ENCODE measurements at regions of chr7 and their contacts with region 1.

Region 1: DNA sequence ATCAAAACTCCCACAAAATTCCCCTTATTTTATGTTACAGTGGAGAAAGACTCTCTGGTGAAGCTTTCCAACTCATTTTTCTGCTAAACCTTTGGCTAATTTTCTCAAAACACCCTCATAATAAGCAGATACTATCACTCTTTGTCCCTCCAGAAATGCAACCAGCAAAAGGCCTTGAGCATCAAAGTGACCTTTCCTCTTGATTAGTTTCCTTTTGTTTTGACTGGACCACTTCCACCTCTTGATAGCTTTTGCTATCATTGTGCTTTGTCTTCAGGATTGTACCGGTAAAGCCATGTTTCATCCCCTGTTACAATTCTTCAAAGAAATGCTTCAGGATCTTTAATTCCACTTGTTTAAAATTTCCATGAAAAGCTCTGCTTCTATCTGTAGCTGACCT is 115.1 kb upstream of the SLC13A1 start:
- DNase-seq: no peak
- ATAC-seq: no peak
- H3K4me3 ChIP-seq: no peak overlapping the region
- H3K27ac ChIP-seq: no peak overlapping the region
- H3K4me1 ChIP-seq: no peaks in the 10 kb centered on the region
- H3K27me3 ChIP-seq: no peaks in the 10 kb centered on the region
- CTCF ChIP-seq: no peak

Region 2: GRCh38 chr7:122364761-122365280 is 950.1 kb before region 1 on chr7:
- intact Hi-C with region 1: loop called in 1 of 10 experiments (anchors 5 kb)
- DNase-seq: no peak
- ATAC-seq: no peak
- H3K4me3 ChIP-seq: no peak overlapping the region
- H3K27ac ChIP-seq: no peak overlapping the region
- H3K4me1 ChIP-seq: no peaks in the 10 kb centered on the region
- H3K27me3 ChIP-seq: no peaks in the 10 kb centered on the region
- CTCF ChIP-seq: no peak

Region 3: GRCh38 chr7:123242467-123243092 is 72.3 kb before region 1 on chr7:
- intact Hi-C with region 1: no loop called
- DNase-seq: no peak
- ATAC-seq: no peak
- H3K4me3 ChIP-seq: no peak overlapping the region
- H3K27ac ChIP-seq: no peak overlapping the region
- H3K4me1 ChIP-seq: no peaks in the 10 kb centered on the region
- H3K27me3 ChIP-seq: no peaks in the 10 kb centered on the region
- CTCF ChIP-seq: no peak

Region 4: GRCh38 chr7:123393623-123394022 is 78.7 kb after region 1 on chr7:
- intact Hi-C with region 1: no loop called
- DNase-seq: no peak
- ATAC-seq: no peak
- H3K4me3 ChIP-seq: no peak overlapping the region
- H3K27ac ChIP-seq: no peak overlapping the region
- H3K4me1 ChIP-seq: no peaks in the 10 kb centered on the region
- H3K27me3 ChIP-seq: no peaks in the 10 kb centered on the region
- CTCF ChIP-seq: no peak

Region 5: GRCh38 chr7:123433665-123434064 is 118.8 kb after region 1 on chr7:
- intact Hi-C with region 1: no loop called
- DNase-seq: no peak
- ATAC-seq: no peak
- H3K4me3 ChIP-seq: no peak overlapping the region
- H3K27ac ChIP-seq: no peak overlapping the region
- H3K4me1 ChIP-seq: no peaks in the 10 kb centered on the region
- H3K27me3 ChIP-seq: no peaks in the 10 kb centered on the region
- CTCF ChIP-seq: no peak

Measured in heart right ventricle (tissue), 16 donors.